Panc1 (cell line): ENCODE measurements at regions of chr10 and their contacts with region 1.

Region 1: GRCh38 chr10:68271196-68271882 is 39.4 kb upstream of the ATOH7 start:
- DNase-seq: no peak
- ATAC-seq: no peak
- H3K4me3 ChIP-seq: no peak overlapping the region
- H3K27ac ChIP-seq: no peak overlapping the region
- H3K4me1 ChIP-seq: no peaks in the 10 kb centered on the region
- H3K27me3 ChIP-seq: no peaks in the 10 kb centered on the region
- CTCF ChIP-seq: no peak

Region 2: GRCh38 chr10:68371604-68372003 is 100.3 kb after region 1 on chr10:
- CTCF ChIA-PET with region 1: no interaction called
- POLR2A ChIA-PET with region 1: interaction called, 34 read pairs
- in situ Hi-C with region 1: no loop called
- intact Hi-C with region 1: no loop called
- DNase-seq: no peak
- ATAC-seq: no peak
- H3K4me3 ChIP-seq: no peak overlapping the region
- H3K27ac ChIP-seq: no peak overlapping the region
- H3K4me1 ChIP-seq: no peaks in the 10 kb centered on the region
- H3K27me3 ChIP-seq: no peaks in the 10 kb centered on the region
- CTCF ChIP-seq: no peak